Mammary epithelial cell (primary cell): ENCODE measurements at regions of chr14 and their contacts with region 1.

Region 1: DNA sequence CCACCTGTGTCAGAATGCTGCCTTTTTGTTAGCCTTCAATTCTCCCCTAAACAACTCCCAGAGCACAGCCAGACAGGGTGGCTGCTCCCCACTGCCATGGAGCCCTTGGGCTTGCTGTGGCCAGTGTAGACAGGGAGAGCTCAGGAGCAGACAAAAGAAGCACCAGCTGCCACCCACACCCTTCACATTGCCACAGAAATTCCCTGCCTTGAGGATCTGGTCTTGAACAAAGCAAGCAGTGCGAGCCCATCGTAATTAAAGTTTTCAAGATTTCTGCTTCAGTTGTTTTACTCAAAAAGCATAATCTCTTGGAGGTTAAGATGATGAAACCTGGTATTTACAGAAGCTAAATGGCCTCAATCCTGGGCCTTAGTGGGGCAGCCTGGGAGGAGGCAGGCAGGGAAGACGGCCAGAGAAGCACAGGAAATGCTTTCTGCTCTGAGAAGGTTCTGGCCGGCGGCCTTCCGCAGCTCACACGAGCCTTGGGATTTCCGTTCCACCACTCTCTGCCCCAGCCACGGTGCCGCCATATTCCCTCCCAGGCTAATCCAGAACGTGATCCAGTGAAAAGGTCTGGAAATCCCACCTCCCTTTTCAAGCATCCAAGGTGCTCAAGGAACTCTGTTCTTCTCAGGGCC is 535.2 kb downstream of the BCL11B start:
- DNase-seq: no peak
- H3K4me3 ChIP-seq: no peak overlapping the region
- H3K27ac ChIP-seq: no peak overlapping the region
- H3K4me1 ChIP-seq: no peaks in the 10 kb centered on the region
- H3K27me3 ChIP-seq: no peaks in the 10 kb centered on the region
- CTCF ChIP-seq: no peak

Region 2: GRCh38 chr14:98705871-98706300 is 30.9 kb before region 1 on chr14:
- CTCF ChIA-PET with region 1: no interaction called
- dilution Hi-C with region 1: no loop called
- in situ Hi-C with region 1: no loop called
- intact Hi-C with region 1: loop called (anchors 1 kb)
- DNase-seq: no peak
- H3K4me3 ChIP-seq: no peak overlapping the region
- H3K27ac ChIP-seq: no peak overlapping the region
- H3K4me1 ChIP-seq: no peaks in the 10 kb centered on the region
- H3K27me3 ChIP-seq: no peaks in the 10 kb centered on the region
- CTCF ChIP-seq: no peak